ENCODE measurements at regions of chr15 and their contacts with region 1.

Region 1: GRCh38 chr15:80010131-80010673 is 39.2 kb upstream of the BCL2A1 start:
- DNase-seq: no peak
- ATAC-seq: peak; percentile 59
- H3K4me3 ChIP-seq: peak overlapping the region in 2 of 5 experiments; percentile 6 to 38
- H3K4me3 Mint-ChIP-seq: peak overlapping the region; percentile 42
- H3K27ac ChIP-seq: peak overlapping the region; percentile 71 to 76
- H3K27ac Mint-ChIP-seq: peak overlapping the region; percentile 83
- H3K4me1 ChIP-seq: peaks cover 36 to 42% of the 10 kb centered on the region in 2 donors
- H3K4me1 Mint-ChIP-seq: peaks cover 68% of the 10 kb centered on the region
- H3K27me3 ChIP-seq: no peaks in the 10 kb centered on the region
- H3K27me3 Mint-ChIP-seq: no peaks in the 10 kb centered on the region
- CTCF ChIP-seq: no peak

Region 2: DNA sequence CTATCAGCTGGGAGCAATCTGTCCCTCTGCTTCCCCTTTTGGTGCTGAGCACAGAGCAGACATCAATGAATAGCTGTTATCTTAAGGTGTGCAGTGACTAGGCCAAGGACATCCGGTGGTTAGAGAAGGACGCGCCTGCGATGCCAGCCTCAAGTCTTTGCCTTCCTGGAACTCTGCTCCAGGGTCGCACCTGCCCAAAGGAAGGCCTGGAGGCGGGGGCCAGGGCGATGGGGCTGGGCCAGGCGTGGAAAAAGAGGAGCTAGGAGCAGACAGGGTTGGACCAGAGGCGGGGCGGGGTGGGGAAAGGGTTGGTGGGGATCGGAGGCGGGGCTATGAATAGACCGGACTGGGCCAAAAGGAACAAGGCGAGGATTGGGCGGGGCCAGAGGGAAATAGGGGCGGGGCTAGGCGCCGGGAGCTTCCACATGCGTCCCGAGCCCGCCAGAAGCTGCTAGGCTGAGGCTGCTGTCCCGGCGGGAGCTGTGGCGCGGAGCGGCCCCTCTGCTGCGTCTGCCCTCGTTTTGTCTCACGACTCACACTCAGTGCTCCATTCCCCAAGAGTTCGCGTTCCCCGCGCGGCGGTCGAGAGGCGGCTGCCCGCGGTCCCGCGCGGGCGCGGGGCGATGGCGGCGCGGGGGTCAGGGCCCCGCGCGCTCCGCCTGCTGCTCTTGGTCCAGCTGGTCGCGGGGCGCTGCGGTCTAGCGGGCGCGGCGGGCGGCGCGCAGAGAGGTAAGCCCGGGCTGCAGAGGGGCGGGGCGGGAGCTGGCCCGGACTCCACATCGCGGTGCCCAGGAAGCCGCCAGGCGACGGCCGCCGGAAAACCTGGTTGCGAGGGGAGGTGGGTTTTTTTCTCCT is 1444.9 kb before region 1 on chr15 and contains the start of gene CHRNA5:
- CTCF ChIA-PET with region 1: no interaction called
- POLR2A ChIA-PET with region 1: no interaction called
- intact Hi-C with region 1: loop called (anchors 10 kb)
- DNase-seq: peak; percentile 81
- ATAC-seq: peak; percentile 95
- H3K4me3 ChIP-seq: peak within 1 kb of the TSS; percentile 54 to 80 (median 68)
- H3K4me3 Mint-ChIP-seq: peak within 1 kb of the TSS; percentile 89
- H3K27ac ChIP-seq: peak within 1 kb of the TSS in 1 of 2 donors; percentile 30
- H3K27ac Mint-ChIP-seq: peak within 1 kb of the TSS; percentile 82
- H3K4me1 ChIP-seq: peaks cover 16 to 17% of the 10 kb centered on the region in 2 donors
- H3K4me1 Mint-ChIP-seq: peaks cover 26% of the 10 kb centered on the region
- H3K27me3 ChIP-seq: peaks cover 0 to 12% (median under 1%) of the 10 kb centered on the region in 4 experiments
- H3K27me3 Mint-ChIP-seq: peaks cover 6% of the 10 kb centered on the region
- CTCF ChIP-seq: no peak
- total RNA-seq, gene CHRNA5: 1.2 and 2.0 TPM in 2 replicates

Region 3: DNA sequence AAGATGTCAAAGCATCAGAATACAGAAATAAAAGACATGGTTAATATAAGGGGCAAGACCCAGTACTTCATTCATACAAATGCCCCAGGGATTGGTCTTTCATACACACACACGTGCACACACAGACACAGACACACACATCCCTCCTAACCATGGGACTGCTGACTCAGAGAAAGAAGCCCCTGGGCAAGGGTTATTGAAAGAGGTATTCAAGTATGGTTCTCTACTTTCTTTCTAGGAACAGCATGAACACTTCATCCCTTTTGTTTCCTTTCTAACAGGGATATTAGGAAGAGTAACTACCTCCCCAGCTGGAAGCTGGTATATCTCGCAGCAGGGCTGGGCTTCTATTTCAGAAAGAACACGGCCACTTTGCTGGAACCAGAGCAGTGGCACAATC is 16.1 kb after region 1 on chr15:
- CTCF ChIA-PET with region 1: no interaction called
- POLR2A ChIA-PET with region 1: no interaction called
- intact Hi-C with region 1: no loop called
- DNase-seq: no peak
- ATAC-seq: no peak
- H3K4me3 ChIP-seq: no peak overlapping the region
- H3K4me3 Mint-ChIP-seq: no peak overlapping the region
- H3K27ac ChIP-seq: no peak overlapping the region
- H3K27ac Mint-ChIP-seq: no peak overlapping the region
- H3K4me1 ChIP-seq: peaks cover 6 to 8% of the 10 kb centered on the region in 2 donors
- H3K4me1 Mint-ChIP-seq: peaks cover 16% of the 10 kb centered on the region
- H3K27me3 ChIP-seq: no peaks in the 10 kb centered on the region
- H3K27me3 Mint-ChIP-seq: no peaks in the 10 kb centered on the region
- CTCF ChIP-seq: no peak